ENCODE measurements at regions of chr20 and their contacts with region 1.

Region 1: DNA sequence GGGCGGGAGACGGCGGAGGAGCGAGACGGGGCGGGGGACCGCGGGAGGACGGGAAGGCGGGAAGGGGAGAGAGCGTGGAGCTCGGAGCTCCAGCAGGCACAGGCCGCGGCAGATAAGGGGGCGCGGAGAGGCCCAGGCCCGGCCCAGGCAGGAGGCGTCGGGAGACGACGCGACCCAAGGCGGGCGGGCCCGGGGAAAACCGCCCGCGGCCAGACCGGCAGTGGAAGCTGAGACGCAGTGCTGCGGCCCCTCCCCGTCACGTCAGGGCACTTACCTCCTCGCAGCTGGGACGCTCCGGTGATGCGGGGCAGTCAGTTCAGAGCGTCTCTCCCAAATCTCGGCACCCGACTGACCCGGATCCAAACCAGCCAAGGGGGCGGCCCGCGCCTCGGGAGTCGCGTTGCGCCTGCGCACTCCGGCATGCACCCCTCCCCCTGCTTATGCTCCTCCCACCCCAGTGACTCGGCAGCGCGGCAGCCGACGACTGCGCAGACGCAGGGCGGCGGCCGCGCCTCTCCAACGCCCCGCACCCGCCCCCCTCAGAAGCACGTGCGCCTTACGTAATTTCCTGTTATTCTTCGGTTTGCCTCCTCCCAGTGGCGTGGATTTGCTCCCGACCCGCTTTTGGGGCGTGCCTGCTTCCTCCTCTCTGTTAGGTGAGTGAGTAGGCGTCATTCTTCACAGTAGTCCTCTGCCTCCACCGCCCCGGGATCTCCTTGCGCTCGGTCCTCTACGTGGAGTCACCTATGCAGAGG is at the start of gene OSER1:
- DNase-seq: peak; percentile 98 to 99
- ATAC-seq: peak; percentile 83 to 85
- H3K4me3 ChIP-seq: peak within 1 kb of the TSS; percentile 90 to 98 (median 95)
- H3K27ac ChIP-seq: peak within 1 kb of the TSS; percentile 97 to 100 (median 98)
- H3K4me1 ChIP-seq: peaks cover 44 to 50% of the 10 kb centered on the region in 2 donors
- H3K27me3 ChIP-seq: no peaks in the 10 kb centered on the region
- CTCF ChIP-seq: no peak
- POLR2A ChIP-seq: peak; percentile 97 to 98
- total RNA-seq, gene OSER1: 73.0 to 114 (median 94.5) TPM

Region 2: DNA sequence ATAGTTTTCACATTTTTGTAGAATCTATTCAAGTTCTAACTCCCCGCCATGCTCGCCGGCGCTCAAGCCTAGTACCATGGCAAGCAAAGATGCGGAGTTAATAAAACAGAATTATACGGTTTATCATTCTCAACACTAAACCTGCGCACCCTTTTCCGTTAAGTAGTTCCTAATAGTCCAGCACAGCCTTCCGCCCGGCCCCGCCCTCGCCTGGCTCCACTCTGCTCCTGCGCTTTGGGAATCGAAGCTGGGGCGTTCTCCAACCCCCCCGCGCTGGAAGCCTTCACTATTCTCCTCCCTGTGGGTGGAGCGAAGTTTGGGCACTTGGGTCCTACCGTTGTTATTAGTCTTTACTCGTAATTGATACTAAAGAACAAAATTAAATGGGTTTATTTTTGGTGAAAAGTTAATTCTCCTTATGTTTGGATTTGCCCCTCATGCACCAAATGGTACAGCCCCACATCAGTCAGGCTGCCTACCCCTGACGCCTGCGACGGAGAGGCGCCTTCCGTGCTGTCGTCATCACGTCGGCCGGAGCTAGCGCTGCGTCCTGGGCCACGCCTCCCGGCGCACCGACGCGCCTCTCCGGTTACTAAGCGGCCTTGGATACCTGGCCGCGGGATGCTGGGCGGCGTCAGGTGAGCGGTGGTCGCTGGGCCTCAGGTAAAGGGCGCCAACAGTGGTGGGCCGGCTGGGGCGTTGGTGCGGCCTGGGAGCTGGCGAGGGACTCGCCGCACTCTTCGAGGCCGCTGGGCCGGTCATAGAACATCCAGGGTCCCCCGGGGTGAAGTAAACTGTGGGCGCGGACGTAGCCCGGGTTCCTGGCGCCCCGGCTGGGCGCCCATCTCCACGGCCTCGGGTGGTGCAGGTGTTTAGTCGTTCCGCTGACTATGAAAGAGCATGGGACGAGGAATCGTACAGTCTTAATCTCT is 619.9 kb before region 1 on chr20 and contains the start of gene IFT52:
- in situ Hi-C with region 1: no loop called
- intact Hi-C with region 1: loop called (anchors 10 kb)
- DNase-seq: peak; percentile 84 to 88
- ATAC-seq: peak; percentile 99
- H3K4me3 ChIP-seq: peak within 1 kb of the TSS; percentile 92 to 97 (median 96)
- H3K27ac ChIP-seq: peak within 1 kb of the TSS; percentile 78 to 93 (median 86)
- H3K4me1 ChIP-seq: peaks cover 12 to 16% of the 10 kb centered on the region in 2 donors
- H3K27me3 ChIP-seq: no peaks in the 10 kb centered on the region
- CTCF ChIP-seq: no peak
- POLR2A ChIP-seq: peak in 1 of 2 donors; percentile 6
- total RNA-seq, gene IFT52: 1.7 to 3.4 (median 2.9) TPM

Region 3: DNA sequence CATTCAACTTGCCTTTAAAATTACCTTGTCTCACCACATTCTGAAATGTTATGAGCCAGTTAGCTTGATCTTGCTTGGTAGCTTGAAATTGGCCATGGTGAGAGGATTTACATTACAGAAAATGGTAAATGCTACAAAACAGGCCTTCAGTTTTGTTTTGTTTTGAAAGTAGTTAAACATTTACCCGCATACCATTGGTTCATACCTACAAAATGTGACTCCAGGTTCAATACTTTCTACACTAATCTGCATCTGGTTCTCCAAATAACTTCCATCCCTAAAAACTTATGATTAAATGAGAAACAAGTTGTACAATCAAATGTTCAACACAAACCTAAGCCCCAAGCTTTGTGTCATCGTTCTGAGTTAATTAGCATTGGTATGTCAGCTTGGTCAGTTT is 574.2 kb before region 1 on chr20:
- in situ Hi-C with region 1: no loop called
- intact Hi-C with region 1: no loop called
- DNase-seq: no peak
- ATAC-seq: no peak
- H3K4me3 ChIP-seq: no peak overlapping the region
- H3K27ac ChIP-seq: no peak overlapping the region
- H3K4me1 ChIP-seq: no peaks in the 10 kb centered on the region
- H3K27me3 ChIP-seq: no peaks in the 10 kb centered on the region
- CTCF ChIP-seq: no peak
- POLR2A ChIP-seq: no peak

Region 4: DNA sequence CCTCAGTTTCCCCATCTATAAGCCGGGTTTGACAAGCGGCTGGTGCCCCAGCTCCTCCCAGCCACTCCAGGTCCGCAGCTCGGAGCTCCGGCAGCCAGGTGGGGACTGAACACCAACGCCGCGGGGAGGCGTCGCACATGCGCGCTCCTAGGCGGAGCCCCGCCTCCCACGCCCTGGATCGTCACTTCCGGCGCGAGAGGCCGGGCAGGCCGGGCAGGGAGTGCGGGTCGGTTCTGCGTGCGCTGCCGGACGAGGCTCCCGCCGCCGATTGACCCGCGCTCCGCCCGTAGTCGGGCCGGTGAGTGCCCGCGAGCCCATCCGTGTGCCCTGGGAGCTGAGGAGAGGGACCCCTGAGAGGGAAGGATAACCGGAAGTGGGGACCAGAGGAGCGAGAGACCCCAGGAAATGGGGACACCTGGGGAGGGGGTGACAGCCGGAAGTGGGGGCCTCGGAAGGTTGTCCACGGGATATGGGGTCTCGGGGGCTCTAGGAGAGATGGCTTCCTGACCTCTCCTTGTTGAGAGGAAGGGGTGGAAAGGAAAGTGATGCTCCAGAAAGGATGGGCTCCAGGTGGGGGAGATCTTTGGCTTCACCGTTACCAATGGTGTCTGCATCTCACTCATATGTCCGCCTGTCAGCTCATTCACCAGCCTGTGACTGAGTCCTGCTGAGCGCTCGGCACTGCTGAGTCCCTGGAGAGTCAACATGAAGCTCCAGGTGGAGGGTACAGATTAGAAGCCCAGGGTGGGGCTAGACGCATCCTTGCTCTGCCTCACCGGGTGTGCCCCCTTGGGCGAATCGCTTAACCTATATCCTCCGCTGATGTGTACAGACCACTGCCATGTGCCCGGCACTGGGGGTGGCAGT is 265.3 kb after region 1 on chr20 and contains the start of gene TTPAL:
- in situ Hi-C with region 1: loop called (anchors 10 to 25 kb)
- intact Hi-C with region 1: loop called (anchors 5 kb)
- DNase-seq: peak; percentile 77 to 88
- ATAC-seq: peak; percentile 85 to 87
- H3K4me3 ChIP-seq: peak within 1 kb of the TSS; percentile 66 to 97 (median 78)
- H3K27ac ChIP-seq: peak within 1 kb of the TSS; percentile 88 to 99 (median 92)
- H3K4me1 ChIP-seq: peaks cover 12 to 15% of the 10 kb centered on the region in 2 donors
- H3K27me3 ChIP-seq: no peaks in the 10 kb centered on the region
- CTCF ChIP-seq: peak; percentile 31 to 63 (median 52)
- POLR2A ChIP-seq: peak; percentile 96 to 98
- total RNA-seq, gene TTPAL: 3.5 to 5.0 (median 4.7) TPM

Region 5: DNA sequence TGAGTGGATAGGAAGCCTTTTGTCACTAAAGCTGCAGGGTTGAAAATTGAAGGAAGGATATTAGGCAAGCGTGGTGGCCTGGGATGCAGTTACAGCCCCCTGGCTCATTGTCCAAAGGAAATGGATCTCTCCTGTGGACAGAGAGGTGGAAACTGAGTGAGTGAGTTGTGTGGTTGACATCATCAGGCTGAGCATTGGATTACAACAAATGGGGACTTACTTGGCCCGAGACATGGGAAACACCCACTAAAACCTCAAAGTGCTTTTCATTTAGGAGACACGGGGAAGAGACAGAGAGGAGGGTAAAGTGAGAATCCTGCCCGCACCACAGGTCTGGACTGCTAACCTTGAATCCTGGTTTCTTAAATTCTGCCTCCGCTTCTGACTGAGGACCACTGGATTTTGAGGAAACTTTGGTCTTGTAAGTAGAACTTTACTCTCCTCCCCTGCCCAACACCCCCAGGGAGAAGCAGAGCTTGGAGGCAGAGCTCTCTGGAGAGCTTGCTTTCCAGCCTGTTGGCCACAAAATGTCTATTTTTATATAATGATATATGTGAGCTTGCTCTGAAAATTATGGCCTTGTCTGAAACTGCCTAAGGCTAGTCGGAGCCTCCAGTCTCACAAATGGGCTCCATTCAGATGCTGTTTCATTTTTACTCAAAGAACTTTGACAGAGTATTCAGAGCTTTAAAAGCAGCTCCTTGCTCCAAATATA is 371.9 kb after region 1 on chr20 and contains the start of gene PKIG:
- in situ Hi-C with region 1: loop called in 1 of 4 experiments (anchors 25 kb)
- intact Hi-C with region 1: loop called (anchors 10 kb)
- DNase-seq: peak; percentile 89 to 92
- ATAC-seq: peak; percentile 88
- H3K4me3 ChIP-seq: peak within 1 kb of the TSS; percentile 65 to 76 (median 74)
- H3K27ac ChIP-seq: peak within 1 kb of the TSS; percentile 95 to 98 (median 98)
- H3K4me1 ChIP-seq: peaks cover 71 to 79% of the 10 kb centered on the region in 2 donors
- H3K27me3 ChIP-seq: no peaks in the 10 kb centered on the region
- CTCF ChIP-seq: no peak
- POLR2A ChIP-seq: peak; percentile 89 to 97
- total RNA-seq, gene PKIG: 72.9 to 153 (median 100) TPM

Region 6: DNA sequence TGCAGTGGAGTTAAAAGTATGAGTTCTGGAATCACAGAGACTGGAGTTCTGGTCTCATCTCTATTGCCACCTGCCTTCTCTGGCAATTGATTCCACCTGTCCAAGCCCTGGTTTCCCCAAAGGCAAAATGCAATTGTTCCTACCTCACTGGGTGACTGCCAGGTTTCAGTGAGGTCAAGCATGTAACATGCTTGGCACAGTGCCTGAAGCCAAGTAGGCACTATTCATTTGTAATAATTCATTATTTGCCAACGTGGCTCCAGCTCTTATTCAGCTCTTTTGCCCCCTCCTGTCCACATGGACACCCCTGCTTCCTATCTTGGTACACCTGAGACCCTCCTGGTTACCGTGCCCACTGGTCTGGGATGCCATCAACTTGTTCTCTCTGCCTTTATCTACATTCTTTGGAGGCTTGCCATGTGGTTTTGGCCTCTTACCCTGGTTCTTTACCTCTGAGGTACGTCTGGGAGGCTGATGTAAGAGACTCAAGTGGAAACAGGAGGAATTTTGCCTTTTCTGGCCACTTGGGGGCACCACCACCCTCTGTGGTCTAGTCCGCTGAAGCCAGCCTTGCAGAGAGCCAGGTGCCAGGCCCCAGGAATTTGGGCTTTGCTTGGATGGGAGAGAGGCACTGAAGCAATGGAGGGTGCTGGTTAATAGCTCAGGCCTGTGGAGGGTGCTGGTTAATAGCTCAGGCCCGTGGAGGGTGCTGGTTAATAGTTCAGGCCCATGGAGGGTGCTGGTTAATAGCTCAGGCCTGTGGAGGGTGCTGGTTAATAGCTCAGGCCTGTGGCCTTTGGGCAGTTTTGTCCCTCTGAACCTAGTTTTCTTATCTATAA is 536.8 kb after region 1 on chr20:
- in situ Hi-C with region 1: loop called in 2 of 4 experiments (anchors 25 kb)
- intact Hi-C with region 1: no loop called
- DNase-seq: peak; percentile 28 to 63
- ATAC-seq: peak; percentile 50 to 57
- H3K4me3 ChIP-seq: no peak overlapping the region
- H3K27ac ChIP-seq: no peak overlapping the region
- H3K4me1 ChIP-seq: peaks cover 0 to 10% of the 10 kb centered on the region in 2 donors
- H3K27me3 ChIP-seq: peaks cover 10 to 13% (median 12%) of the 10 kb centered on the region in 3 donors
- CTCF ChIP-seq: peak; percentile 58 to 73 (median 61)
- POLR2A ChIP-seq: no peak

Region 7: GRCh38 chr20:45347936-45348778 is 1137.6 kb after region 1 on chr20 and contains the start of gene SDC4:
- in situ Hi-C with region 1: loop called in 2 of 4 experiments (anchors 25 kb)
- intact Hi-C with region 1: no loop called
- DNase-seq: peak; percentile 65 to 86
- ATAC-seq: peak; percentile 35 to 45
- H3K4me3 ChIP-seq: peak within 1 kb of the TSS; percentile 60 to 97 (median 91)
- H3K27ac ChIP-seq: peak within 1 kb of the TSS; percentile 90 to 100 (median 98)
- H3K4me1 ChIP-seq: peaks cover 21 to 45% of the 10 kb centered on the region in 2 donors
- H3K27me3 ChIP-seq: no peaks in the 10 kb centered on the region
- CTCF ChIP-seq: no peak
- POLR2A ChIP-seq: peak; percentile 99
- total RNA-seq, gene SDC4: 50.4 to 168 (median 97.8) TPM

Measured in gastrocnemius medialis (tissue), 4 donors.